Activated naive CD4-positive, alpha-beta T cell treated with anti-CD3 and anti-CD28 coated beads for 36 hours (primary cell): ENCODE measurements at regions of chr11 and their contacts with region 1.

Region 1: GRCh38 chr11:35082321-35083182 is 56.4 kb upstream of the CD44 start:
- DNase-seq: peak; percentile 89
- H3K4me3 Mint-ChIP-seq: peak overlapping the region; percentile 66
- H3K27ac Mint-ChIP-seq: peak overlapping the region; percentile 90
- H3K4me1 Mint-ChIP-seq: peaks cover 91% of the 10 kb centered on the region
- H3K27me3 Mint-ChIP-seq: no peaks in the 10 kb centered on the region

Region 2: DNA sequence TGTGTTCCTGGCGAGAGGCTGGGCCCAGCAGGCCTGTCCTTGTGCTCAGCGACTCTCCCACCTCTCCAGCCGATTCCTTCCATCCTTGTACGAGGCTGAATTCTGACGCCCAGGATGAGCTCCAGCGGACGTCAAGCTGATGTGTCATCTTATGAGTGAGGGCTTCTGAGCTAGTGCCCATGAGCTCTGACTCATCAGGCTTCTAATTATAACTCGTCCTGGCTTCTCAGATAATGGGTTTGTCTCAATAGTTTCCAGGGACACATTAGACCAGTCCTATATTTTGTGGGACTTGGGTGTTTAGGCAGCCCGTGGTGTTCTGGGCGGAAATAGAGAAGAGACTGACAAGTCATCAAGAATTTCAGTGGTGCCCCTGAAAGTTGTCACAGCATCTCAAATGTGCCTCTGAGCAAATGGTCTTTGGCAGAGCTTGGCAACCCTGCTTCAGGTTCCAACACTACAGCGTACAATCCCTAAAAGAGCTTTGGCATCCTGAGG is 51.8 kb before region 1 on chr11:
- CTCF ChIA-PET with region 1: no interaction called
- intact Hi-C with region 1: loop called (anchors 1 kb)
- DNase-seq: peak; percentile 55
- H3K4me3 Mint-ChIP-seq: peak overlapping the region; percentile 59
- H3K27ac Mint-ChIP-seq: peak overlapping the region; percentile 93
- H3K4me1 Mint-ChIP-seq: peaks cover 44% of the 10 kb centered on the region
- H3K27me3 Mint-ChIP-seq: no peaks in the 10 kb centered on the region

Region 3: DNA sequence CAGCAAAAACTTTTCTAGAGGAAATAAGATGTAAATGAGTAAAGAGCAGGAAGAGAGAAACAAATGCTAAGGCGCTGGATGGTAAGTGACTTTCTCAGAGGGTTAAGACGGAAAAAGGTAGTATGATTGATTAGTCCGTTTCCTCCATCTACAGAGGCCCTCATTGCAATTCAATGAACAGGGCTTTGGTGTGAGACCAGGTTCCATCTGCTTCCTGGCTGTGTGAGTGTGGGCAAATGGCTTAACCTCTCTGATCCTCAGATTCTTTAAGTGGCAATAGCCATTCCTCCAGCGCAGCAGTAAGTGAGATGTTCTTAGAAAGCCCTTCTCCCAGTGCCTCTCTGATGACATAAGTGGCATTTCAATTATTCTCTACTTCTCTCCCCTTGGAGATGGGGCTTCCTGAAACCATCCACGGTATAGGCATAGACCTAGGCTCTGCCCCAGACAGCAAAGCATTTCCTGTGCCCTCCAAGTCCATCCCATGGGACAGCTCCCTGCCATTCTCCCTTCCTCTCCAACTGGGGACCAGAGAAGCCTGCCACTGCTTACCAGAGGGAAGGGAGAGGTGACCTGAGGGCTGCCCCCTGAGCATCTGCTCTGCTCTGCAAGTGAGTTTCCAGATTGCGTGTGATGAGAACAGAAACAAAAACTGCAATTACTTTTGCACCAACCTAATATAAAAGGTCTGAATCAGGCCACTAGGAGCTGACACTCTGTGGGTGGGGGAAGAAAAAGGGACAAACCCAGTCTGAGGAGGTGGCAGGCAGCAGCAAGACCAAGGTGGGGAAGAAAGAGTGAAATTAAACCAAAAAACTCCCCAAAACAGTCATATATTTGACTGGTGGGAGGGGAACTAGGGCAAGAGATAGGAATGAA is 43.7 kb after region 1 on chr11:
- CTCF ChIA-PET with region 1: interaction called, 3 read pairs
- intact Hi-C with region 1: loop called (anchors 1 kb)
- DNase-seq: peak; percentile 81
- H3K4me3 Mint-ChIP-seq: peak overlapping the region; percentile 54
- H3K27ac Mint-ChIP-seq: peak overlapping the region; percentile 91
- H3K4me1 Mint-ChIP-seq: peaks cover 65% of the 10 kb centered on the region
- H3K27me3 Mint-ChIP-seq: no peaks in the 10 kb centered on the region

Region 4: DNA sequence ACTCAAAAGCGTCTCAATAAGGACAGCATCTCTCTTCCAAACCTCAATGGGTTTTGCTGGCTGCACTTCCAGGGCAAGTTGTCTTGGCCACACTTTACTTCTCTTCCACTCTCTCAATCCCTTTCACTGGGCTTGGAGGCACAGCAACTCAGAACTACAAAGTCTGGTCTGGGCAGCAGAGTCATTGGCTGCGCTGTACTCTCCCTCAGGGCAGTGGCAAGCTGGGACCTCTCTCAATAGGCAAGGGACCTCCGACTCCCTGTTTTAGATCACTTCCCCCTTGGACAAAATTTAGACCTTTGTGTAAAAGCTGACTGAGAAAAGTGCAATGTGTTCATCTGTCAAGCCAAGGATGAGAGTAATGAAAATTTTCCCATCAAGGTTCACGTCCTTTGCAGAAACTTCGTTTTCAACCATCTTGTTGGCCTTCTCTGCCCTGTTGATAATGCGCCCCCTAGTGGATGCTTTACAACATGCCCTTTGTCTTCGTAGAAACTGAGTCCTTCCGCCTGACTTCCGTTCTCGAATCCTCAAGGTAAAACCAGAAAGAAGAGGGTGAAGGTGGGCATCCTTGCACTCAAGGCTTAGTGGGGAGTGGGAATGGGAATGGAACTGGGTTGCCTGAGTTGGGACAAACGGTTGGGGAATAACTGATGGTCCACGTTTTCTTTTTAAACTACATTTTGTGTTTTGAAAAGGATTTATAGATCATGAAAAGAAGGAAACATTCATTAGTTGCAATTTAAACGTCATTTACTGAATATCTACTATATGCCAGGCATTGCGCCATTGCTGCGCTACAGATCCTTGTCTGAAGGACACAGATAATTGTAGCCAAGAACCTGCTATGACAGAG is 155.5 kb after region 1 on chr11:
- CTCF ChIA-PET with region 1: interaction called, 3 read pairs
- intact Hi-C with region 1: loop called (anchors 2 kb)
- DNase-seq: peak; percentile 79
- H3K4me3 Mint-ChIP-seq: no peak overlapping the region
- H3K27ac Mint-ChIP-seq: peak overlapping the region; percentile 34
- H3K4me1 Mint-ChIP-seq: peaks cover 69% of the 10 kb centered on the region
- H3K27me3 Mint-ChIP-seq: no peaks in the 10 kb centered on the region

Region 5: DNA sequence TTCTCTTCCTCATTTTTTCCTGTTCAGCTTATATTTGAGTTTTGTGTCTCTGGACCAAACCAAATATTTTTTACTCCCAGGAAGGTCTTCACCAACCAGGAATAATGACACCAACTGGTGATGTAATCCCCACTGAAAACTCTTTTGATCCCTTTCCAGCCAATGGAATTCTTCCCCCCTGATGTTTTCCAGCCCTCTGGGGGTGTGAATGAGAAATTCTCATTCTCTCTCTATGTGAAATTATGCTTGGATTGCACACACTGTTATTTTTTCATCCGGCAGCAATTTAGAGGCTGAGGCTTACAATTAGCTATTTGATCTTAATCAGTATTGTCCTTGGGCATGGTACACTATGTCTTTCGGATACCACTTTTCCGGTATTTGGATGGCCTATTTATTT is 376.3 kb after region 1 on chr11:
- CTCF ChIA-PET with region 1: no interaction called
- intact Hi-C with region 1: no loop called
- DNase-seq: no peak
- H3K4me3 Mint-ChIP-seq: no peak overlapping the region
- H3K27ac Mint-ChIP-seq: no peak overlapping the region
- H3K4me1 Mint-ChIP-seq: no peaks in the 10 kb centered on the region
- H3K27me3 Mint-ChIP-seq: peaks cover 2% of the 10 kb centered on the region